WTC11 (cell line): ENCODE measurements at regions of chr19 and their contacts with region 1.

Region 1: DNA sequence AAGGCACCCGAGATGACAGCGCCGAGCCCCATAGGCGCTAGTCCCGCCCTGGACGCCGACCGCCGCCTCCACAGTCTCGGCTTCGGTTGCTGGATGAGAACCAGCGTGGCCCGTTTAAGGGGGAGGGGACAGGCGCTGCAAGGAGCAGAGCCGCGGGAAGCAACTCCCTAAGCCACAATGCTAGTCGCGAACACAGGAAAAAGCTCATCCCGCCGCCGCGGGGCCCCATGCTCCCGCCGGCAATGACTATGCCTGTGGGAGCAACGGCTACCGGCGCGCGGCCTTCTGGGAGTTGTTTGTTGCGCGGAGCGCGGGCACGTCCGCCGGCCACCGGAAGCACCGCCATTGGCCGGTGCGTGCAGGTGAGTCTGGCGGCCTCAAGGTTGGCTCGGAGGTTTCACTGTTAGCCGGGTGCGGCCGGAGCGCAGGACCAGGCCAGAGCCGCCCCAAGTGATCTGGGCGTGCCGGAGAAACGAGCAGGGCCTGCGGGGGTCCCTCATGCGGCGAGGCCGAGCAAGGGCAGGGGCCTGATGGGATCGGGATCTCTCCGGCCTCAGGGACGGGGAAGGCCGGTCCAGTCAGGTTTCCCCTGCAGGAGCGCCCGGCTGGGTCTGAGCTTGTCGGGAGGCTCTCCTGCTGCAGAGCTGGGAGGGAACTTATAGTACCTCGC is at the start of gene ZNF544:
- DNase-seq: peak; percentile 81
- ATAC-seq: peak; percentile 85
- H3K4me3 Mint-ChIP-seq: peak within 1 kb of the TSS; percentile 92
- H3K27ac Mint-ChIP-seq: peak within 1 kb of the TSS; percentile 97
- H3K4me1 Mint-ChIP-seq: peaks cover 22% of the 10 kb centered on the region
- H3K27me3 Mint-ChIP-seq: peaks cover 4% of the 10 kb centered on the region; the same call in 1 of the 2 replicates
- CTCF ChIP-seq: no peak
- total RNA-seq, gene ZNF544: 52.8 to 63.8 TPM (median 59.2 TPM) in 3 replicates

Region 2: DNA sequence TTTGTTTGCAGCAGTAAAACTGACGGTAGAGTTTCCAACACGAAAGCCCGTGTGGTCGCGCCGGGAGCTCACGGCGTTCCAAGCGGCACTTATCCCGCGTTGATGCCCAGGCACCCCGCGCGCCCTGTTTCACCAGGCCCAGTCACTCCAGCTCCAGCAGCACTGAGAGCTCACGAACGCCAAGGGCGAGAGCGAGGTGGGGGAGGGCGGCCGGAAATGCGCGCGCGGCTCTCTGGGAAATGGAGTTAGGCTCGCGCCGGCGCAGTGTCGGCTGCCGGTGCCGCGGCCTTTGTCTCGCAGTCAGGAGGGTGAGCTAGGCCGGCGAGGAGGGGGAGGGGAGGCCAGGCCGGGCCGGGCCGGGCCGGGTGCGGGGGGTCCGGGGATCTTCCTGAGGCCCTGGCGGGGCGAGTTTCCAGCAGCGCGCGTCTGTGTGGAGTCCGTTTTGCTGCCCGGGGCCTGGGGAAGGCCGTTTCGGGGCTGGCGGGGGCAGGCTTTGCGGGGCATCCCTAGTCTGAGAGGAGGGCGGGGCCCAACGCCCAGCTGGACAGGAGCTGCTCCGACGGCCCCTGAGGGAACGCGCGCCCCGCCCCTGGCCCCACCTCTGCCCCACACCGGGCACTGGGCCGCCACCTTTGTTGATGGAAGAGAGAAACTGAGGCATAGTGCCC is 169.6 kb before region 1 on chr19 and contains the start of gene ZNF135:
- CTCF ChIA-PET with region 1: no interaction called
- POLR2A ChIA-PET with region 1: no interaction called
- DNase-seq: peak; percentile 90
- ATAC-seq: peak; percentile 82
- H3K4me3 Mint-ChIP-seq: peak within 1 kb of the TSS; percentile 69
- H3K27ac Mint-ChIP-seq: peak within 1 kb of the TSS; percentile 93
- H3K4me1 Mint-ChIP-seq: peaks cover 26% of the 10 kb centered on the region
- H3K27me3 Mint-ChIP-seq: peaks cover 6% of the 10 kb centered on the region
- CTCF ChIP-seq: no peak
- total RNA-seq, gene ZNF135: 5.6 to 8.0 TPM (median 7.2 TPM) in 3 replicates

Region 3: GRCh38 chr19:58144467-58144866 is 84.3 kb before region 1 on chr19:
- CTCF ChIA-PET with region 1: no interaction called
- POLR2A ChIA-PET with region 1: no interaction called
- DNase-seq: no peak
- ATAC-seq: no peak
- H3K4me3 Mint-ChIP-seq: no peak overlapping the region
- H3K27ac Mint-ChIP-seq: no peak overlapping the region
- H3K4me1 Mint-ChIP-seq: peaks cover 2% of the 10 kb centered on the region; the same call in 1 of the 2 replicates
- H3K27me3 Mint-ChIP-seq: peaks cover 3% of the 10 kb centered on the region
- CTCF ChIP-seq: no peak

Region 4: GRCh38 chr19:58203814-58204475 is 24.8 kb before region 1 on chr19:
- CTCF ChIA-PET with region 1: interaction called, 12 read pairs
- POLR2A ChIA-PET with region 1: interaction called, 13 read pairs
- DNase-seq: peak; percentile 72
- ATAC-seq: peak; percentile 93
- H3K4me3 Mint-ChIP-seq: peak overlapping the region; percentile 79
- H3K27ac Mint-ChIP-seq: 0 out of 2 replicates have a peak overlapping the region, but pooled peaks have one; percentile 57
- H3K4me1 Mint-ChIP-seq: peaks cover 9% of the 10 kb centered on the region
- H3K27me3 Mint-ChIP-seq: no peaks in the 10 kb centered on the region
- CTCF ChIP-seq: no peak

Region 5: DNA sequence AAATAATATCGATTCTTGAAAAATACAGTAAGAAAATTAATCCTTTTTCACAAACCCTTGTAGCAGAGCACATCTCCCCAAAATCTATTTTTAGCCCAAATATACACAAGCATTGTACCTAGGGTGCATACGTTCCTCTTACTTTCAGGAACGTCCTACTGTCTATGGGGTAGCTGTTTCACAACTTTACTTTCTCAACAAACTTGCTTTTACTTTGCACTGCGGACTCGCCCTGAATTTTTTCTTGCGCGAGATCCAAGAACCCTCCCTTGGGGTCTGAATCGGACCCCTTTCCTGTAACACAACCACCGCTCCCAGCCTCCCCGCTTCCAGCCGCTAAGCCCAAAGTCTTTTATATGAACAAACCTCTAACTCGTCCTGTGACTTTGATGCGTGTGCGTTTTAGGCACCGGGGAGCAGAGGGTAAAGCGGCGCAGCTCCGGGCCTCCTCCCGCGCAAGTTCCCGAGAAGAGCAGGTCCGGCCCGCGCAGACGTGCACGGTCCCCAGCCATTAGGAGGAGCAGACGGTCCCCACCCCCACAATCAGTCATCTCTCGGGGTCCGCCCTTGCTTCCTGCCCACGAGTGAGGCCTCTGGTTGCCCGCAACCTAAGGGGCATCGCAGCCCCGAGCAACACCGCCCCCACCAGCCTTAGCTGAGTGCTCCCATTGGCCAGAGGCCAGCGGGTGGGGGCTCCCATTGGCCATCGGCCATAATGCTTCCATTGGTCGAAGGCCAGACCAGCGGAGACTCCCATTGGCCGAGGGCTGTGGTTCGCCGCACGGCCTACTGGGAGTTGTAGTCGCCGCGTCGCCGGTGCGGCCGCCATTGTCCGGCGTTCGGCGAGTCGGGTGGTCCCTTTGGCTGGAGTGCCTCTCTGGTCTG is 49.7 kb after region 1 on chr19 and contains the start of gene ZNF8:
- CTCF ChIA-PET with region 1: interaction called, 10 read pairs
- POLR2A ChIA-PET with region 1: interaction called, 4 read pairs
- DNase-seq: peak; percentile 99
- ATAC-seq: peak; percentile 97
- H3K4me3 Mint-ChIP-seq: peak within 1 kb of the TSS; percentile 95
- H3K27ac Mint-ChIP-seq: peak within 1 kb of the TSS; percentile 85
- H3K4me1 Mint-ChIP-seq: peaks cover 22% of the 10 kb centered on the region
- H3K27me3 Mint-ChIP-seq: no peaks in the 10 kb centered on the region
- CTCF ChIP-seq: no peak
- total RNA-seq, gene ZNF8: 18.8 to 19.1 TPM (median 18.9 TPM) in 3 replicates